ENCODE measurements at regions of chr17 and their contacts with region 1.

Region 1: DNA sequence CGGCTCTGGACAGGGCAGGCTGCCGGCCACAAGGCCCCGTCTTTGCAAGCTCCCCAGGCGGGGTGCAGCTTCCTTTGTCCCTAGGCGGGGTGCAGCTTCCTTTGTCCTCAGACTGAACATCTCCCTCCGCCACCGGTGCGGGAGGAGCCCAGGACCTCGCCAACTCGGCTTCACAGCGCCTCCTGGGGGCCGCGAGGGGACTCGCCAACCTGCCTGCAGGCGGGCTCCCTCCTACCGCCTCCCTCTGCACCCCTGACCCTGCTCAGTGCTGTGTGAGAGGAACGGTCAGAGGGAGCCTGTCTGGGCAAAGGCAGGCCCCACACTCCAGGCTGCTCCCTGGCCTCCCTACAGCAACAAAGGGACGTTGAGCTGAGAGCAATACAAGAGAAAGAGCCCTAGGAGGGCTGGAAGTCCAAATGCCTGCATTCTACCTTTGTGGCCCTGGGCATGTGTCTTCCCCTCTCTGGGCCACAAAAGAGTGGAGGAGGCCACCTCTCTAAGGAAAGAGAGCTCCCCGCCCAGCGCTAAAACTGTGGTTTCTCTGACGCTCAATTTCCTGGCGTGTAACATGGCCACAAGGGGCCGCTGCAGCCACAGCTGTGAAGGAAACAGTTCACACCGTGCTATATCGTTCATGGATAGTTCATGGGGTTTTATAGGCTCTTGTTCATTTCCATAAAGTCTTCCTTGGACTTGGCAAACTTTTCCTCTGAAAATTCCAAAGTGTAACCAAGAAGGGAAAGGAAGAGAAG is 20.9 kb upstream of the KRT19 start:
- DNase-seq: no peak
- H3K4me3 ChIP-seq: peak overlapping the region; percentile 11 to 22
- H3K27ac ChIP-seq: peak overlapping the region; percentile 92
- H3K4me1 ChIP-seq: peaks cover 37% of the 10 kb centered on the region
- H3K27me3 ChIP-seq: no peaks in the 10 kb centered on the region
- CTCF ChIP-seq: peak; percentile 74 to 81 (median 76)
- POLR2A ChIP-seq: no peak

Region 2: DNA sequence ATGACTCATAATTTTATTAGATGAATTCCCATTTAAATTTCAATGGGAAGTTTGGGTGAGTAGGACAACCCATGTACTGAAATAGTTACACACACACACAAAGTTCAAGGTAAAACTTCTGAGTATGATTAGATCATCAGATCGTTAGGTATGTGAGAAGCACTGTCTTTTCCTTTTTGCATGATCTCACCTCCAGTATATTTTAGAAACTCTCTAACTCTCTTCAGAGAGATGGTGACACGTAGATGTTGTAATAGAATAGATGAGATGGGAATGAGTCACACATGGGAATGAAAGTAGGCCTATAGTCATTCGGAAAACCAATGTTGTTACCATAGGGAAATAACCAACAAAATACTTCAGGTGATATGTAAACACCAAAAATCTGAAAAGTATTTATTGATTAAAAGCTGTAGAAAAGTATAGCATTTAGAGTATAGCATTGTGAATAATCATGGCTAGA is 633.8 kb before region 1 on chr17:
- intact Hi-C with region 1: loop called (anchors 10 kb)
- DNase-seq: no peak
- H3K4me3 ChIP-seq: no peak overlapping the region
- H3K27ac ChIP-seq: peak overlapping the region; percentile 12
- H3K4me1 ChIP-seq: peaks cover 40% of the 10 kb centered on the region
- H3K27me3 ChIP-seq: no peaks in the 10 kb centered on the region
- CTCF ChIP-seq: no peak
- POLR2A ChIP-seq: no peak

Region 3: GRCh38 chr17:41648411-41649195 is 99.6 kb after region 1 on chr17:
- intact Hi-C with region 1: loop called (anchors 1 kb)
- DNase-seq: no peak
- H3K4me3 ChIP-seq: peak overlapping the region; percentile 40 to 47
- H3K27ac ChIP-seq: peak overlapping the region; percentile 87
- H3K4me1 ChIP-seq: peaks cover 52% of the 10 kb centered on the region
- H3K27me3 ChIP-seq: no peaks in the 10 kb centered on the region
- CTCF ChIP-seq: peak; percentile 87 to 98 (median 94)
- POLR2A ChIP-seq: no peak